IMR-90 (cell line): ENCODE measurements at regions of chr4 and their contacts with region 1.

Region 1: GRCh38 chr4:169485791-169486742 is 126.3 kb downstream of the NEK1 start:
- DNase-seq: peak; percentile 71
- ATAC-seq: peak; percentile 70
- H3K4me3 ChIP-seq: no peak overlapping the region
- H3K27ac ChIP-seq: no peak overlapping the region; the same call in 1 of the 2 replicates
- H3K4me1 ChIP-seq: peaks cover 3% of the 10 kb centered on the region
- H3K27me3 ChIP-seq: no peaks in the 10 kb centered on the region
- CTCF ChIP-seq: peak; percentile 77
- POLR2A ChIP-seq: no peak
- RAD21 ChIP-seq: peak; percentile 86

Region 2: GRCh38 chr4:169010125-169011023 is 475.7 kb before region 1 on chr4 and contains the start of gene CBR4:
- CTCF ChIA-PET with region 1: interaction called, 4 read pairs
- POLR2A ChIA-PET with region 1: interaction called, 11 read pairs
- dilution Hi-C with region 1: no loop called
- in situ Hi-C with region 1: loop called (anchors 5 kb)
- intact Hi-C with region 1: loop called (anchors 5 kb)
- DNase-seq: peak; percentile 99
- ATAC-seq: peak; percentile 98
- H3K4me3 ChIP-seq: peak within 1 kb of the TSS; percentile 78
- H3K27ac ChIP-seq: peak within 1 kb of the TSS; percentile 87
- H3K4me1 ChIP-seq: peaks cover 4% of the 10 kb centered on the region
- H3K27me3 ChIP-seq: no peaks in the 10 kb centered on the region
- CTCF ChIP-seq: peak; percentile 40
- POLR2A ChIP-seq: peak; percentile 86
- RAD21 ChIP-seq: peak; percentile 28
- total RNA-seq, gene CBR4: 4.5 and 9.2 TPM in 2 replicates

Region 3: GRCh38 chr4:169024762-169025161 is 461.3 kb before region 1 on chr4:
- CTCF ChIA-PET with region 1: interaction called, 6 read pairs
- POLR2A ChIA-PET with region 1: no interaction called
- dilution Hi-C with region 1: no loop called
- in situ Hi-C with region 1: no loop called
- intact Hi-C with region 1: loop called (anchors 1 kb)
- DNase-seq: peak; percentile 59
- ATAC-seq: peak; percentile 95
- H3K4me3 ChIP-seq: no peak overlapping the region
- H3K27ac ChIP-seq: no peak overlapping the region
- H3K4me1 ChIP-seq: no peaks in the 10 kb centered on the region
- H3K27me3 ChIP-seq: 0 out of 2 replicates have a peak, but pooled peaks cover 2% of the 10 kb centered on the region
- CTCF ChIP-seq: peak; percentile 68
- POLR2A ChIP-seq: no peak
- RAD21 ChIP-seq: peak; percentile 79

Region 4: DNA sequence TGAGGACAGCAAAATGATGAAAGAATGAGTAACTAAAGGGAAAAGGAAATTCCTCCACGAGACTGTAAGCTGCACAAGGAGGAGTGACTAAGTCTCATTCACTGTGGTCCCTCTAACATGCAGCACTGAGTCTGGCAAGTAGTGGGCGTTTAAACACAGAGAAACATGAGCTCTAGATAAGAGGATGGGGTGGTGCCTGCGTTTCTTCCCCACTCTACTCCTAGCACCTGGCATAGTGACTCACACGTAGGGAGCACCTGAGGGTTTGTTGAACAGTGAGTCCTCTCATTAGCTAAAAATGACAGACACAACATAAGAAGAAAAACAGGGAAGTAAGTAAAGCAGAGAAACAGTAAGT is 370.2 kb before region 1 on chr4:
- CTCF ChIA-PET with region 1: no interaction called
- POLR2A ChIA-PET with region 1: no interaction called
- dilution Hi-C with region 1: no loop called
- in situ Hi-C with region 1: no loop called
- intact Hi-C with region 1: loop called (anchors 1 kb)
- DNase-seq: peak; percentile 99
- ATAC-seq: peak; percentile 97
- H3K4me3 ChIP-seq: no peak overlapping the region
- H3K27ac ChIP-seq: peak overlapping the region; percentile 71; the same call in 1 of the 2 replicates
- H3K4me1 ChIP-seq: peaks cover 18% of the 10 kb centered on the region
- H3K27me3 ChIP-seq: no peaks in the 10 kb centered on the region
- CTCF ChIP-seq: peak; percentile 49
- POLR2A ChIP-seq: peak; percentile 34; the same call in 1 of the 2 replicates
- RAD21 ChIP-seq: peak; percentile 60

Region 5: GRCh38 chr4:169314906-169315305 is 171.2 kb before region 1 on chr4:
- CTCF ChIA-PET with region 1: no interaction called
- POLR2A ChIA-PET with region 1: no interaction called
- dilution Hi-C with region 1: no loop called
- in situ Hi-C with region 1: no loop called
- intact Hi-C with region 1: loop called (anchors 2 kb)
- DNase-seq: peak; percentile 70
- ATAC-seq: peak; percentile 8; the same call in 1 of the 2 replicates
- H3K4me3 ChIP-seq: no peak overlapping the region
- H3K27ac ChIP-seq: no peak overlapping the region
- H3K4me1 ChIP-seq: peaks cover 8% of the 10 kb centered on the region
- H3K27me3 ChIP-seq: no peaks in the 10 kb centered on the region
- CTCF ChIP-seq: no peak
- POLR2A ChIP-seq: no peak
- RAD21 ChIP-seq: no peak

Region 6: DNA sequence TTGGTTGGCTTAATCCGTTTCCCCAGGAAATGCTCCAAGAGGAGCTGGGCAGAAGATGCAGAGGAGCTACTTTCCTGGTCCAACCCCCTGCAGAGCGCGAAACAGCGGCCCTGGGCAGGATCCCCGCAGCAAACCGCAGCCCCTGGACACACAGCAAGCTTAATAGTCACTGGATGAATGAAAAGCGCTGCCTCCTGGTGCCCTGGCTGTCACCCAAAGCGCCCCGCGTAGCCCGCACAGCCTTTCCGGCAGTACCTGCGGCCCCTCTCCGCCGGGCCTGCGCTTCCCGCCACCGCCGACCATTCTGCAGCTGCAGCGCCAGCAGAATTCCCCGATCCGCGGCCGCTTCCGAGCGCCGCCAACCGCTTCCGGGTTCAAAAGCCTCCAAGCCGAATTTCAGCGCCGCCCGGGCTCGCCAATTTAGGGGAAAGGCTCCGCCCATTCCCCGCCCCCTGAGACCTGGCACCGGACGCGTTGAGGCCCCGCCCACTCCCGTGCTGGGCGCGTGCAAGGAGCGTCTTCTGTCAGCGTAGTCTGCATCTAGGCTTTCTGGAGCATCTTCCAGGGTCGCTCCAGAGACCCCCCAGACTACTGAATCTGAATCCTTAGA is 271.6 kb after region 1 on chr4 and contains the start of gene HPF1:
- CTCF ChIA-PET with region 1: no interaction called
- POLR2A ChIA-PET with region 1: no interaction called
- dilution Hi-C with region 1: no loop called
- in situ Hi-C with region 1: no loop called
- intact Hi-C with region 1: no loop called
- DNase-seq: peak; percentile 75
- ATAC-seq: peak; percentile 95
- H3K4me3 ChIP-seq: peak within 1 kb of the TSS; percentile 81
- H3K27ac ChIP-seq: peak within 1 kb of the TSS; percentile 45; the same call in 1 of the 2 replicates
- H3K4me1 ChIP-seq: peaks cover 1% of the 10 kb centered on the region; the same call in 1 of the 2 replicates
- H3K27me3 ChIP-seq: no peaks in the 10 kb centered on the region; the same call in none of the 2 replicates
- CTCF ChIP-seq: no peak
- POLR2A ChIP-seq: no peak
- RAD21 ChIP-seq: no peak
- total RNA-seq, gene HPF1: 15.2 and 27.5 TPM in 2 replicates